ENCODE measurements at regions of chr10 and their contacts with region 1.

Region 1: GRCh38 chr10:79347226-79347893 is at the start of gene PPIF:
- DNase-seq: peak; percentile 79
- ATAC-seq: peak; percentile 86
- H3K4me3 ChIP-seq: peak within 1 kb of the TSS; percentile 75 to 85 (median 78)
- H3K27ac ChIP-seq: peak within 1 kb of the TSS; percentile 93
- H3K4me1 ChIP-seq: peaks cover 62% of the 10 kb centered on the region
- H3K27me3 ChIP-seq: no peaks in the 10 kb centered on the region
- CTCF ChIP-seq: peak; percentile 88
- EP300 ChIP-seq: no peak
- POLR2A ChIP-seq: peak; percentile 97 to 98
- RAD21 ChIP-seq: peak; percentile 84
- total RNA-seq, gene PPIF: 157 and 178 TPM in 2 replicates

Region 2: DNA sequence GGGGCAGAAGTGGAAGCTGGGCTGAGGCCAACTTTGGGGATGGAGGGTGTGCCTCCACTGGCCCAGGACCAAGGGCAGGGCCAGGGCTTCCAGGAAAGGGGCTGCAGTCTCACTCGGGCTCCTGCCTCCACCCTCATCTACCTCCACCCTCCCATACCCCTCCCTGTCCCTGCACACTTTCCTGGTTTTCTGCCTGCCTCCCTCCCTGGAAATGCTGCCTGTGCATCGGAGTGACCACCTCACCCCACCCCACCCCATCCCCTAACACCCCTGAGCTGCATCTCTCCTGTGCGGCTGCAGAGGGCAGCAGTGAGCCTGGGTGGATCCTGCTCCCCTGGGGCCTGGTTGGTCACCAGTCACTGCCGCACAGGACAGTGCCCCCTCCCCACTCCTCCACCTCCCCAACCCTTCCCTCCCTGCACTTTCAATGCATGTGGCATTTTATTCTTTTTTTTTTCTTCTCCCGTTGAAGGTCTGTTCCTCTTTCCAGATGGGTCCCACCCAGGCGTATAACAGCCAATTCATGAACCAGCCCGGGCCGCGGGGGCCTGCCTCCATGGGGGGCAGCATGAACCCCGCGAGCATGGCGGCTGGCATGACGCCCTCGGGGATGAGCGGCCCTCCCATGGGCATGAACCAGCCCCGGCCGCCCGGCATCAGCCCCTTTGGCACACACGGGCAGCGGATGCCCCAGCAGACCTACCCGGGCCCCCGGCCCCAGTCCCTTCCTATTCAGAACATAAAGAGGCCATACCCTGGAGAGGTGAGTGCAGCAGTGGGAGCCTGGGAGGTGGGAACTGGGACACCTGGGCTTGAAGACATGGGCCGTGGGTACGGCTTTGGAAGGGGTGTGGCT is 54.2 kb before region 1 on chr10:
- CTCF ChIA-PET with region 1: no interaction called
- POLR2A ChIA-PET with region 1: no interaction called
- in situ Hi-C with region 1: no loop called
- intact Hi-C with region 1: loop called (anchors 10 kb)
- DNase-seq: peak; percentile 18
- ATAC-seq: peak; percentile 75
- H3K4me3 ChIP-seq: no peak overlapping the region
- H3K27ac ChIP-seq: no peak overlapping the region
- H3K4me1 ChIP-seq: no peaks in the 10 kb centered on the region
- H3K27me3 ChIP-seq: no peaks in the 10 kb centered on the region
- CTCF ChIP-seq: peak; percentile 74
- EP300 ChIP-seq: no peak
- POLR2A ChIP-seq: no peak
- RAD21 ChIP-seq: 0 out of 2 replicates have a peak, but pooled peaks have one; percentile 18

Region 3: DNA sequence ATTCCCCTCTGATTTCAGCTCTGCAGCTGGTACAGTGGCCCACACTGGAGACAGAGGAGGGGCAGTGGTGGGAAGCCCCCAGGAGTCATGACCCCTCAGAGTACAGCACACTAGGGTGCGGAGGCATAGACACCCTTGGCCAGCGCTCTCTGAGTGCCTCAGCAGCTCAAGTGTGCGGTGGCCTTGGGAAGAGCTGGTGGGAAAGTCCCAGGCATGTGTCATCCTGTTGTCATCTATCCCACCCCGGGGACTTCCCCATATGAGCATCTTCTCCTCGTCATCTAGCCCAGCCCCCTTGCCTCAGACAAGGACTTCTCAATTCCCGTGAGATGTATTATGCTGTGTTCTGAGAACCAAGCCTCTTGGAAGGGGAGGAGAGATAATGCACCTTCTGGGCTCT is 15.7 kb before region 1 on chr10:
- CTCF ChIA-PET with region 1: no interaction called
- POLR2A ChIA-PET with region 1: interaction called, 134 read pairs
- in situ Hi-C with region 1: no loop called
- intact Hi-C with region 1: loop called (anchors 1 kb)
- DNase-seq: no peak
- ATAC-seq: no peak
- H3K4me3 ChIP-seq: no peak overlapping the region
- H3K27ac ChIP-seq: no peak overlapping the region
- H3K4me1 ChIP-seq: peaks cover 53% of the 10 kb centered on the region
- H3K27me3 ChIP-seq: no peaks in the 10 kb centered on the region
- CTCF ChIP-seq: no peak
- EP300 ChIP-seq: no peak
- POLR2A ChIP-seq: no peak
- RAD21 ChIP-seq: no peak

Region 4: GRCh38 chr10:79358783-79359182 is 11.4 kb after region 1 on chr10:
- CTCF ChIA-PET with region 1: no interaction called
- POLR2A ChIA-PET with region 1: interaction called, 45 read pairs
- in situ Hi-C with region 1: no loop called
- intact Hi-C with region 1: loop called (anchors 1 kb)
- DNase-seq: peak; percentile 94
- ATAC-seq: peak; percentile 91
- H3K4me3 ChIP-seq: no peak overlapping the region
- H3K27ac ChIP-seq: peak overlapping the region; percentile 44
- H3K4me1 ChIP-seq: peaks cover 41% of the 10 kb centered on the region
- H3K27me3 ChIP-seq: no peaks in the 10 kb centered on the region
- CTCF ChIP-seq: peak; percentile 38
- EP300 ChIP-seq: peak in 1 of 2 experiments; percentile 40; a peak in 1 of 4 replicates
- POLR2A ChIP-seq: no peak
- RAD21 ChIP-seq: no peak

Region 5: GRCh38 chr10:79390551-79391209 is 43.3 kb after region 1 on chr10:
- CTCF ChIA-PET with region 1: no interaction called
- POLR2A ChIA-PET with region 1: no interaction called
- in situ Hi-C with region 1: no loop called
- intact Hi-C with region 1: no loop called
- DNase-seq: no peak
- ATAC-seq: no peak
- H3K4me3 ChIP-seq: no peak overlapping the region
- H3K27ac ChIP-seq: no peak overlapping the region
- H3K4me1 ChIP-seq: peaks cover 14% of the 10 kb centered on the region
- H3K27me3 ChIP-seq: no peaks in the 10 kb centered on the region
- CTCF ChIP-seq: no peak
- EP300 ChIP-seq: no peak
- POLR2A ChIP-seq: no peak
- RAD21 ChIP-seq: no peak